Astrocyte of the cerebellum (primary cell): ENCODE measurements at regions of chr10 and their contacts with region 1.

Region 1: GRCh38 chr10:63720072-63720537 is 198.9 kb downstream of the REEP3 start:
- DNase-seq: peak; percentile 32
- H3K4me3 ChIP-seq: no peak overlapping the region
- CTCF ChIP-seq: peak; percentile 85

Region 2: GRCh38 chr10:63166742-63167258 is 553.3 kb before region 1 on chr10:
- in situ Hi-C with region 1: loop called (anchors 5 kb)
- DNase-seq: peak; percentile 83
- H3K4me3 ChIP-seq: no peak overlapping the region
- CTCF ChIP-seq: peak; percentile 83

Region 3: DNA sequence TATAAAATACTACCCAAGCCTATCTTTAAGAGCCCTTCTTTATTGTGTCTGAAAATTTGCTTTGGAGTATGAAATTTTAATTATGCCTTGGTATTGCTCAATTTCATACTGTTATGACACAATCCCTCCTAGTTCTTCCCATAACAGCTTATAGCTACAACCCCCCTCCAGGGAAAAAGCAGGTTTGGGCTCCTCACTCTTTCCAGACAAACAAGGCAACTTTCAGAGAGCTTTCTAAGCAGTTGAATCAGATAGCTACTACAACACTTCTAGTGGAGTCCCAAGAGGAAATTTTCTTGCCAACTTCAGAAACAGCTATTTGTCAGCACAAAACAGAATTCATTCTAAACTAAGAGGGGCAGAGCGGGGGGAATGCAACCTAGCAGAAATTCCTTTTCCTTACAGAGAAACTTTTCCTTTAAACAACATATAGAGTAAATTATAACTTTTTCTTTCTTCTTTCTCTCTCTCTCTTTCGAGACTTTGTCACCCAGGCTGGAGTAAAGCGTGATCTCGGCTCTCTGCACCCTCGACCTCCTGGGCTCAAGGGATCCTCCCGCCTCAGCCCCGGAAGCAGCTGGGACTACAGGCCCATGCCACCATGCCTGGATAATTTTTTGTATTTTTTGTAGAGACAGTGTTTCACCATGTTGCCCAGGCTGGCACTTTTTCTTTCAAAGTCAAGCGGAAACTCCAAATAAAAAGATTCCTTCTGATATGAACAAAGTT is 228.4 kb before region 1 on chr10:
- in situ Hi-C with region 1: loop called (anchors 25 kb)
- DNase-seq: peak; percentile 43
- H3K4me3 ChIP-seq: no peak overlapping the region
- CTCF ChIP-seq: no peak

Region 4: GRCh38 chr10:63629363-63630084 is 90.6 kb before region 1 on chr10:
- in situ Hi-C with region 1: loop called (anchors 5 kb)
- DNase-seq: peak; percentile 99
- H3K4me3 ChIP-seq: peak overlapping the region; percentile 52
- CTCF ChIP-seq: peak; percentile 86

Region 5: GRCh38 chr10:63799521-63800300 is 79.6 kb after region 1 on chr10:
- in situ Hi-C with region 1: no loop called
- DNase-seq: no peak
- H3K4me3 ChIP-seq: no peak overlapping the region
- CTCF ChIP-seq: no peak